Common myeloid progenitor, CD34-positive (primary cell): ENCODE measurements at regions of chr17 and their contacts with region 1.

Region 1: GRCh38 chr17:76726231-76726775 is at the start of gene JMJD6:
- DNase-seq: peak; percentile 95 to 98 (median 97)
- H3K4me3 ChIP-seq: peak within 1 kb of the TSS; percentile 78 to 92 (median 84)
- H3K27ac ChIP-seq: peak within 1 kb of the TSS; percentile 90 to 97
- H3K4me1 ChIP-seq: peaks cover 9 to 34% (median 30%) of the 10 kb centered on the region in 4 experiments
- H3K27me3 ChIP-seq: no peaks in the 10 kb centered on the region

Region 2: GRCh38 chr17:76540381-76541300 is 185.7 kb before region 1 on chr17:
- CTCF ChIA-PET with region 1: no interaction called
- POLR2A ChIA-PET with region 1: no interaction called
- DNase-seq: peak; percentile 71 to 91 (median 89)
- H3K4me3 ChIP-seq: peak overlapping the region in 5 of 7 experiments; percentile 33 to 73 (median 53)
- H3K27ac ChIP-seq: no peak overlapping the region
- H3K4me1 ChIP-seq: peaks cover 0 to 51% (median 45%) of the 10 kb centered on the region in 4 experiments
- H3K27me3 ChIP-seq: peaks cover 4 to 41% (median 23%) of the 10 kb centered on the region in 5 experiments

Region 3: DNA sequence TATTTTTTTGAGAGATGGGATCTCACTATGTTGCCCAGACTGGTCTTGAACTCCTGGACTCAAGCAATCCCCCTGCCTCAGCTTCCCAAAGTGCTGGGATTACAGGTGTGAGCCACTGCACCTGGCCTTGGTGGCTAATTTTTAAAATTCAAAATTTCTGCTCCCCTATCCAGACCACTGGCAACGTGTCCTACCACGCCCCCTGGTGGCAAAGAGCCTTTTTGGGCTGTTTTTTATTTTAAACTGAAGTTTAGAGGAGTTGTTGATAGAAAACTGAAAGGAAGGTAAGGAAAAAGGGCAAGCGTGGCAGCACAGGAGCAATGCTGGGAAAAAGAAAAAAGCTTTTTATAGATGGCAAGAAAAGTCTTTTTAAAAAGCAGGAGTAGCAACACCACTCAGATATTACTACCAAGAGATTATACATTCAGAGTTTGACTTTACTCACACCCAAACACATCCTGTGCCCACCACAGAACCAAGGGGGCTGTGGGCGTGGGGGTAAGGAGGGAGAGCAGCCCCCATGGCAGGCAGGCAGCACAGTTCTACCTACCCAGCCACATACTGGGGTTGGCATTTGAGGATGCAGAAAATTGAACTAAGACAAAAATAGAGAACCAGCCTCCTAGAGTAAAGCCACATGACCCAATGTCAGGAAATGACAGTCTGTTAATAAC is 11.3 kb before region 1 on chr17:
- CTCF ChIA-PET with region 1: interaction called, 14 read pairs
- POLR2A ChIA-PET with region 1: no interaction called
- DNase-seq: peak; percentile 57 to 72 (median 63)
- H3K4me3 ChIP-seq: peak overlapping the region in 5 of 7 experiments; percentile 31 to 57 (median 45)
- H3K27ac ChIP-seq: peak overlapping the region; percentile 46 to 74
- H3K4me1 ChIP-seq: peaks cover 17 to 43% (median 38%) of the 10 kb centered on the region in 4 experiments
- H3K27me3 ChIP-seq: peaks cover 0 to 4% (median 0%) of the 10 kb centered on the region in 5 experiments

Region 4: GRCh38 chr17:76737082-76737675 is 10.9 kb after region 1 on chr17 and contains the start of gene SRSF2:
- CTCF ChIA-PET with region 1: interaction called, 14 read pairs
- POLR2A ChIA-PET with region 1: interaction called, 33 read pairs
- DNase-seq: peak; percentile 98 to 99 (median 99)
- H3K4me3 ChIP-seq: peak within 1 kb of the TSS; percentile 98 to 100 (median 99)
- H3K27ac ChIP-seq: peak within 1 kb of the TSS; percentile 88 to 95
- H3K4me1 ChIP-seq: peaks cover 32 to 47% (median 38%) of the 10 kb centered on the region in 4 experiments
- H3K27me3 ChIP-seq: no peaks in the 10 kb centered on the region

Region 5: GRCh38 chr17:76791053-76791980 is 65.0 kb after region 1 on chr17:
- CTCF ChIA-PET with region 1: no interaction called
- POLR2A ChIA-PET with region 1: no interaction called
- DNase-seq: peak; percentile 64 to 93 (median 91)
- H3K4me3 ChIP-seq: peak overlapping the region in 5 of 7 experiments; percentile 19 to 67 (median 55)
- H3K27ac ChIP-seq: peak overlapping the region in 1 of 2 experiments; percentile 74
- H3K4me1 ChIP-seq: peaks cover 0 to 19% (median 13%) of the 10 kb centered on the region in 4 experiments
- H3K27me3 ChIP-seq: no peaks in the 10 kb centered on the region